CD4-positive, alpha-beta memory T cell (primary cell): ENCODE measurements at regions of chr2 and their contacts with region 1.

Region 1: GRCh38 chr2:69306822-69307578 is 80.0 kb downstream of the GFPT1 start:
- DNase-seq: peak; percentile 39 to 59 (median 49)
- H3K4me3 ChIP-seq: peak overlapping the region; percentile 29 to 63
- H3K4me3 Mint-ChIP-seq: peak overlapping the region; percentile 51 to 82 (median 78)
- H3K27ac ChIP-seq: no peak overlapping the region
- H3K27ac Mint-ChIP-seq: peak overlapping the region in 2 of 7 donors; percentile 13 to 52
- H3K4me1 ChIP-seq: peaks cover 34% of the 10 kb centered on the region
- H3K4me1 Mint-ChIP-seq: peaks cover 13 to 45% (median 27%) of the 10 kb centered on the region in 4 donors
- H3K27me3 ChIP-seq: peaks cover 18% of the 10 kb centered on the region
- H3K27me3 Mint-ChIP-seq: peaks cover 16 to 19% of the 10 kb centered on the region in 2 donors

Region 2: GRCh38 chr2:68943581-68944568 is 363.1 kb before region 1 on chr2:
- CTCF ChIA-PET with region 1: interaction called, 10 read pairs
- POLR2A ChIA-PET with region 1: no interaction called
- intact Hi-C with region 1: loop called (anchors 5 kb)
- DNase-seq: peak; percentile 43 to 67 (median 58)
- H3K4me3 ChIP-seq: no peak overlapping the region
- H3K4me3 Mint-ChIP-seq: peak overlapping the region in 1 of 8 donors; percentile 12
- H3K27ac ChIP-seq: no peak overlapping the region
- H3K27ac Mint-ChIP-seq: no peak overlapping the region
- H3K4me1 ChIP-seq: no peaks in the 10 kb centered on the region
- H3K4me1 Mint-ChIP-seq: peaks cover 2 to 5% (median 5%) of the 10 kb centered on the region in 4 donors
- H3K27me3 ChIP-seq: peaks cover 15% of the 10 kb centered on the region
- H3K27me3 Mint-ChIP-seq: peaks cover 27 to 28% of the 10 kb centered on the region in 2 donors

Region 3: DNA sequence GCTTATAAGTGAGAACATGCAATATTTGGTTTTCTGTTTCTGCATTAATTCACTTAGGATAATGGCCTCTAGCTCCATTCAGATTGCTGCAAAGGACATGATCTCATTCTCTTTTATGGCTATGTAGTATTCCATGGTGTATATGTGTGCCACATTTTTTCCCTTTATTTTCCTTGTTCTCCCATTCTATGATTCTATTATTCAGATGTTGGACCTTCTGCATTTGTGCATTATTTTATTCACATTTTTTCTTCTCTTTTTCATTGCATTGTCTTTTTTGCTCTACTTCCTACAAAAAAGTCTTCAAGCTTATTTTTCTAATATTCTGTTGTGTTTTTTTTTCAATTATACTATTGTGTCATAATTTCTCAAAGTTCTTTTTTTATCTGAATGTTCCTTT is 305.1 kb before region 1 on chr2:
- CTCF ChIA-PET with region 1: no interaction called
- POLR2A ChIA-PET with region 1: no interaction called
- intact Hi-C with region 1: no loop called
- DNase-seq: no peak
- H3K4me3 ChIP-seq: no peak overlapping the region
- H3K4me3 Mint-ChIP-seq: no peak overlapping the region
- H3K27ac ChIP-seq: no peak overlapping the region
- H3K27ac Mint-ChIP-seq: no peak overlapping the region
- H3K4me1 ChIP-seq: no peaks in the 10 kb centered on the region
- H3K4me1 Mint-ChIP-seq: no peaks in the 10 kb centered on the region
- H3K27me3 ChIP-seq: no peaks in the 10 kb centered on the region
- H3K27me3 Mint-ChIP-seq: peaks cover 21 to 44% of the 10 kb centered on the region in 2 donors

Region 4: DNA sequence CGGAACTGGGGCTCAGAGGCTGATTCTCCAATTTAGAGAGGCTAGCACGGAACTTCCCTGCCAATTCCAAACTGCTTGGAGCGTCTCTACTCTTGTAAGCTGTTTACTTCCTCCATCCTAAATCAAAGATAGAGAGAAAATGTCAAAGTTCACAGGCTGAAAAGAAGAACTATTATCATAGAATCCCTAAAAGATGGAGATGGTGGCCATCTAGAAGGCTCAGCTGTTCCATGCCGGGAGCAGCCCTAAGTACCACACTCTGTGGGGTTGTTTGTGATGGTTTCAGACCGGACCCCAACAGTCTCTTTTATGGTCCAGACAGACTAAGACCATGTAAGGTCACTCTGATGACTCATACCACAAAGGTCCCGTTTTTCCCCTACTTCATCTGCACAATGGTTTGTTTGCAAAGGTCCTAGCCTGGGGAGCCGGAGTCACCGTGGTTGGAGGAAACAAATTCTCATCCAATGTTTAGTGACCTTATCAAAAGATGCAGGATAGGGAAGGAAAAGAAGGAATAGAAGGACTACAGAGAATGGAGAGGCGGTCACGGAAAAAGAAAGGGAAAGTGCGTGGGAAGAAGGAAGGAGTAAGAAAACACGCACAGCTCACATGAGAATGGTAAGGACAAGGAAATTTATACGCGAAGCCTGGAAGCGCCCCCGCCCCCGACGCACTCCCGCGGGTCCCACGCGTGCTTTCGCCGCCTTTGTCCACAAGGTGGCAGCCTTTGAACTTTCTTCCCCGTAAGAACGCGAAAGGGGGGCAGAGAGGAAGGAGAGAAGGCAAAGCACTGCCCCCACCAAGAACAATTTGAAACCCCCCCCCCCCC is 294.5 kb before region 1 on chr2:
- CTCF ChIA-PET with region 1: no interaction called
- POLR2A ChIA-PET with region 1: no interaction called
- intact Hi-C with region 1: loop called (anchors 2 kb)
- DNase-seq: peak; percentile 18 to 38 (median 33)
- H3K4me3 ChIP-seq: peak overlapping the region; percentile 36 to 54
- H3K4me3 Mint-ChIP-seq: peak overlapping the region; percentile 72 to 92 (median 81)
- H3K27ac ChIP-seq: no peak overlapping the region
- H3K27ac Mint-ChIP-seq: peak overlapping the region in 1 of 7 donors; percentile 48
- H3K4me1 ChIP-seq: peaks cover 11% of the 10 kb centered on the region
- H3K4me1 Mint-ChIP-seq: peaks cover 11 to 17% (median 16%) of the 10 kb centered on the region in 4 donors
- H3K27me3 ChIP-seq: peaks cover 32% of the 10 kb centered on the region
- H3K27me3 Mint-ChIP-seq: peaks cover 35 to 36% of the 10 kb centered on the region in 2 donors

Region 5: DNA sequence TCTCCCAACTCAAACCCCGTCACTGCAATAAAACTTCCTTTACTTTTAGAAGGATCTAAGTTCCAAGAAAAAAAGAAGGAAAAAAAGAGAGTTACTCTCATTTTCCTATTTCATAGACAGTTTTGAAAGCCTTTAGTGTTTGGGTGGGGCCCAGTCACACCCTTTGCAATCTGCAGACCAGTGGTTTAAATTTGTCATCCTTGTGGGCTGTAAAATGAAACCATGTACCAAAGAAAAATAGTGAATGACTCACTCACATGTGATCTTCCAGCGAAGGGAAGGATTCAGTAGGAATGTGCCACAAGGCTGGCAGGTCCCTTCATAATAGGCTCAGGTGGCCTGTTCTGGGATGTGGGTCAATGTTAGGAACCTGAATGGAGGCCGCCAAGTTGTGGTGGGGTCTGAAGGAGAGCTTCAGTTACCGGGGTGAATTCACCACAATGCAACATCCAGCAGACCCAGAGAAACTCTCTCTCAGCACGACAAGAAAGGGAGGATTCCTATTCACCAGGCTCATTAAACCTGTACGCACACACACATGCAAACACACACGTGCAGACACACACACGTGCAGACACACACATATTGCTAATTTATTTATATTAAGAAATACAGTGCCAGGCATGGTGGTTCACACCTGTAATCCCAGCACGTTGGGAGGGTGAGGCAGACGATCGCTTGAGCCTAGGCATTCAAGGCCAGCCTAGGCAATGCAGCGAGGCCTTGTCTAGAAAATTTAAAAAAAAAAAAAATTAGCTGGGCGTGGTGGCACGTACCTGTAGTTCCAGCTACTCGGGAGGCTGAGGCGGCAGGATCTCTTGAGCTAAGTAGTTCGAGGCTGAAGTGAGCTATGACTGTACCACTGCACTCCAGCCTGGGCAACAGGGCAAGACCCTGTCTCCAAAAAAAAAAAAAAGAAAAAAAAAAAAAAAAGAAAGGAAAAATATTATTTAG is 463.5 kb after region 1 on chr2:
- CTCF ChIA-PET with region 1: no interaction called
- POLR2A ChIA-PET with region 1: no interaction called
- intact Hi-C with region 1: no loop called
- DNase-seq: peak in 1 of 5 donors; percentile 37
- H3K4me3 ChIP-seq: no peak overlapping the region
- H3K4me3 Mint-ChIP-seq: peak overlapping the region in 4 of 8 donors; percentile 32 to 55 (median 40)
- H3K27ac ChIP-seq: no peak overlapping the region
- H3K27ac Mint-ChIP-seq: peak overlapping the region in 5 of 7 donors; percentile 8 to 64 (median 56)
- H3K4me1 ChIP-seq: peaks cover 34% of the 10 kb centered on the region
- H3K4me1 Mint-ChIP-seq: peaks cover 23 to 74% (median 48%) of the 10 kb centered on the region in 4 donors
- H3K27me3 ChIP-seq: no peaks in the 10 kb centered on the region
- H3K27me3 Mint-ChIP-seq: no peaks in the 10 kb centered on the region